AG04450 (cell line): ENCODE measurements at regions of chr9 and their contacts with region 1.

Region 1: GRCh38 chr9:114082017-114082762 is 4.1 kb upstream of the AMBP start:
- DNase-seq: peak; percentile 74
- H3K4me3 ChIP-seq: no peak overlapping the region
- H3K27ac ChIP-seq: no peak overlapping the region
- H3K27me3 ChIP-seq: peaks cover 14% of the 10 kb centered on the region
- CTCF ChIP-seq: peak; percentile 93

Region 2: DNA sequence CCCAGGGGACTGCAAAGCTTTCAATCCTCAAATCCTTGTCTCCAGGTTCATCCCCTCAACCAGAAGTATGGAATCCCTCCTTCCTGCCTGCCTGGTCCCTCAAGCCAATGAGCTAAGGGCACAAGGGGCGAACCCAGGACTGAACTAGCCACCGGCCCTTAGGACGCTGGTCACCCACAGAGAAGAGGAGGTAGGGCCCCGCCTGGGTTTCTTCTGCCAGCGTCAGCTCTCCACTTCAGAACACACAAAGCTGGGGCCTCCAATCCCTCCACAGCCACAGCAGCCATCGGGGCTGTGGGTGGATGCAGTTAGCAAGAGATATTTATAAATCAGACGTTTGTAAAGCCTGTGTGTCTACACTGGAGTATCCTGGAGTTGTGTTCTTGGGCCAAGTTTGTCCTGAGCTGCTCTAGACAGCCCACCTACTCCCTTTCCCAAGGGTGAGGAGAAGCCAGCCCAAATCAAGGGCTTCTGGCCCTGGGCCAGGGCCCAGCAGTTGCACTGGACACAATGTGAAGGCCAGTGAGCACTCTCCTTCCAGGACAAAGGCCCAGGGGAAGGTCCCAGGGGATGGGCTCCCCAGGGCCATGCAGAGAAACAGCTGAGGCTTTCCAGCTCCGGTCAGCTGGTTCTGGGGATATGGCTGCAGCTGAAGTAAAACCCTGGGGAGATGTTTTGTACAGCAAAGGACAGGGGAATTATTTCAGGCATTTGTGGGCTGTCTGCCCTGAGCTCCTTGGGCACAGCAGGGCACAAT is 23.0 kb before region 1 on chr9:
- CTCF ChIA-PET with region 1: interaction called, 10 read pairs
- POLR2A ChIA-PET with region 1: no interaction called
- DNase-seq: no peak
- H3K4me3 ChIP-seq: no peak overlapping the region
- H3K27ac ChIP-seq: no peak overlapping the region
- H3K27me3 ChIP-seq: peaks cover 2% of the 10 kb centered on the region
- CTCF ChIP-seq: no peak

Region 3: GRCh38 chr9:114098016-114098935 is 16.1 kb after region 1 on chr9:
- CTCF ChIA-PET with region 1: interaction called, 28 read pairs
- POLR2A ChIA-PET with region 1: no interaction called
- DNase-seq: no peak
- H3K4me3 ChIP-seq: peak overlapping the region; percentile 44; the same call in 1 of the 2 replicates
- H3K27ac ChIP-seq: no peak overlapping the region
- H3K27me3 ChIP-seq: peaks cover 32% of the 10 kb centered on the region
- CTCF ChIP-seq: no peak

Region 4: GRCh38 chr9:114282926-114283325 is 200.7 kb after region 1 on chr9:
- CTCF ChIA-PET with region 1: interaction called, 162 read pairs
- POLR2A ChIA-PET with region 1: no interaction called
- DNase-seq: peak; percentile 75
- H3K4me3 ChIP-seq: no peak overlapping the region
- H3K27ac ChIP-seq: peak overlapping the region; percentile 73
- H3K27me3 ChIP-seq: no peaks in the 10 kb centered on the region
- CTCF ChIP-seq: no peak

Region 5: DNA sequence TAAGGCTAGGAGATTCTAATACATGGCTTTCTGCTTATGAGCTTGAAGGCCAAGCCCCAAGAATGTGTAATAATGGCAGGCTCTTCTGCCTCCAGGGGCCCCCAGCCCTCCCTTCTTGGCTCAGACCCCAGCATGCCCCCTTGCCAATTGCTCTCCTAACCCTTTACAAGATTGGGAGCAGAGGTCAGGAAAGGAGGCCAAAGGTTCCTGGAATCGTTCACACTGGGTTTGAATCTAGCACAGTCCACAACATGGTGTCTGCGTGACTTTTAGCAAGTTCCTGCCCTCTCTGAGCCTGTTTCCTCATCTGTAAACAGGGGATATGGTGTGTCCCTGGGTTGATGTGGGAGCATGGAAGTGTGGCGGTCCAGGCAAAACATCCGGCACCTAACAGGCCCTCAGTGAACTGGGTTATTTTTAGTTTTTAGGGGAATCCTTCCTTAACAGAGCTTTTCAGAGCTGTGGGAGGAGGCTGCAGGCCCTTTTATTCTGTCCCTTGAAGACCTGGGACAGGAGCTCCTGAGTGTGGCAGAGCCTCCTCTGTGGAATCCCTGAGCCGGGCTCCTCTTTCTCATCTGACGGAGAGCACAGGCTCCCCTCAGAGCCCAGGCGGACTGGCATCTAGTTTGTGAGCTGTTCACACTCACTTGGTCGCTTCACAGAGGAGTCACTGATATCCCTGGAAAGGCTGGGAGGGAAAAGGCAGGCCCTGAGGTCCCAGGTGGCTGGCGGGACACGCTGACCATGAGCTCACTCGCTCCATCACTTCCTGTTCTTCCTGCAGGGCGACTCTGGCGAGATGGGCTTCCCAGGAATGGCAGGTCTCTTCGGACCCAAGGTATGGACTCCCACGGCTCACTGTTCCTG is 217.3 kb after region 1 on chr9:
- CTCF ChIA-PET with region 1: interaction called, 162 read pairs
- POLR2A ChIA-PET with region 1: no interaction called
- DNase-seq: no peak
- H3K4me3 ChIP-seq: no peak overlapping the region
- H3K27ac ChIP-seq: no peak overlapping the region
- H3K27me3 ChIP-seq: no peaks in the 10 kb centered on the region
- CTCF ChIP-seq: no peak